Left ventricle myocardium inferior (tissue), 1 donor: ENCODE measurements at regions of chr21 and their contacts with region 1.

Region 1: DNA sequence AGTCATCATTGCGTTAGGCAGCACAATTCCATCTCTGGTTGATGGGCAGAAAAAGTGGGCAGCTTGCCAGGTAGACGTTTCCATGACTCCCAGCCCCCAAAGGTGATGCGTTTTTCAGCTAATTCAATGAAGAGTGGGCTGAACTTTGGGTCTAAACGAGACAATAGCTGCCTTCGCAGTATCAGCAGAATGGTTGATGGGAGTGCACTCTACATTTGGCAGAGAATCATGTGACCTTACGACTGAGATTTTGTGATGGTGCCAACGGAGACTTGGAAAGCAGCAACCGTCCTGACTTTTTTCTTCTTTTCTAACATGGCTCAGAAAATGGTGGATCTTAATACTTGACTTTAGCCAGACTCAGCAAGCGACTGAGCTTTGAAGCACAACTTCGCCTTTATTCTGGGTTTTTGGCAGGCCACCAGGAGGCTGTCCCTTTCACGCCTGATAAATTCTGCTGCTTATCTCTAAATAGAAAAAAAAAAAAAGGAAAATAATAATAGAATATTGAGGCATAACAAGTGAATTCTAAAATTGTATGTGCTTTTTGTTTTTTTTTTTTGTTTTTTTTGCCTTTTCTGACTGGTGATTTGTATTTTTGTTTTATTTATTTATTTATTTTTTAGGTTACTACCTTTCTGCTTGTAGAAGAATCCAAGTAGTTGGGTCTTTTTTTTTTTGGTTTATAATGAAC is 804.8 kb downstream of the USP25 start:
- DNase-seq: peak; percentile 80
- H3K4me3 ChIP-seq: peak overlapping the region; percentile 64
- H3K27ac ChIP-seq: peak overlapping the region; percentile 91
- H3K4me1 ChIP-seq: peaks cover 34% of the 10 kb centered on the region
- H3K27me3 ChIP-seq: no peaks in the 10 kb centered on the region
- CTCF ChIP-seq: no peak

Region 2: GRCh38 chr21:16420031-16420724 is 114.4 kb before region 1 on chr21:
- intact Hi-C with region 1: loop called (anchors 5 kb)
- DNase-seq: peak; percentile 38
- H3K4me3 ChIP-seq: peak overlapping the region; percentile 69
- H3K27ac ChIP-seq: peak overlapping the region; percentile 92
- H3K4me1 ChIP-seq: peaks cover 34% of the 10 kb centered on the region
- H3K27me3 ChIP-seq: no peaks in the 10 kb centered on the region
- CTCF ChIP-seq: no peak

Region 3: GRCh38 chr21:16473988-16474387 is 60.6 kb before region 1 on chr21:
- intact Hi-C with region 1: no loop called
- DNase-seq: no peak
- H3K4me3 ChIP-seq: no peak overlapping the region
- H3K27ac ChIP-seq: peak overlapping the region; percentile 69
- H3K4me1 ChIP-seq: peaks cover 61% of the 10 kb centered on the region
- H3K27me3 ChIP-seq: no peaks in the 10 kb centered on the region
- CTCF ChIP-seq: no peak

Region 4: DNA sequence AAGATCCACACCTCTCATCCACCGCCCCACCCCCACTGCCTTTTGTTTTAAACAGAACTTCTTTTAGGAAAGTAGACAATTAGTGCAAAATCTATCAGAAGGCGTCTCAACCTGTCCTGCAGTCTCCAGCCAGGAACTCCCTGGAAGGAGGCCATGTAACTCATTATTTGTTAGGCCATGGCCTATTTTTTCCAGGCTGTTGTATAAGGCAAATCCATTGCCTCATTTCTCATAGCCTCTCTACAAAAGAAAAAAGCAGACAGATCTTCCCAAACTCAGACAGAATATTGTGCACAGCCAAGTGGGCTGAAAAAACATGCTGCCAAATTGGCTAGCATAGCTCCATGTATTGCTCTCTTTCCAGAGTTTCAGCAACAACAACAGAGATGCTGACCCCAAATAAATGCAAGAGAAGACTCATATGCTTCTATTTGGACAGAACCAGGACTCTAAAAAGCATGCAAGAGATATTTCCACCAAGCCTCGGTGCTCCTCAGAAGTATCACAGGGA is 207.6 kb after region 1 on chr21:
- intact Hi-C with region 1: no loop called
- DNase-seq: peak; percentile 13
- H3K4me3 ChIP-seq: no peak overlapping the region
- H3K27ac ChIP-seq: peak overlapping the region; percentile 62
- H3K4me1 ChIP-seq: peaks cover 7% of the 10 kb centered on the region
- H3K27me3 ChIP-seq: no peaks in the 10 kb centered on the region
- CTCF ChIP-seq: no peak